T-cell (primary cell): ENCODE measurements at regions of chr7 and their contacts with region 1.

Region 1: DNA sequence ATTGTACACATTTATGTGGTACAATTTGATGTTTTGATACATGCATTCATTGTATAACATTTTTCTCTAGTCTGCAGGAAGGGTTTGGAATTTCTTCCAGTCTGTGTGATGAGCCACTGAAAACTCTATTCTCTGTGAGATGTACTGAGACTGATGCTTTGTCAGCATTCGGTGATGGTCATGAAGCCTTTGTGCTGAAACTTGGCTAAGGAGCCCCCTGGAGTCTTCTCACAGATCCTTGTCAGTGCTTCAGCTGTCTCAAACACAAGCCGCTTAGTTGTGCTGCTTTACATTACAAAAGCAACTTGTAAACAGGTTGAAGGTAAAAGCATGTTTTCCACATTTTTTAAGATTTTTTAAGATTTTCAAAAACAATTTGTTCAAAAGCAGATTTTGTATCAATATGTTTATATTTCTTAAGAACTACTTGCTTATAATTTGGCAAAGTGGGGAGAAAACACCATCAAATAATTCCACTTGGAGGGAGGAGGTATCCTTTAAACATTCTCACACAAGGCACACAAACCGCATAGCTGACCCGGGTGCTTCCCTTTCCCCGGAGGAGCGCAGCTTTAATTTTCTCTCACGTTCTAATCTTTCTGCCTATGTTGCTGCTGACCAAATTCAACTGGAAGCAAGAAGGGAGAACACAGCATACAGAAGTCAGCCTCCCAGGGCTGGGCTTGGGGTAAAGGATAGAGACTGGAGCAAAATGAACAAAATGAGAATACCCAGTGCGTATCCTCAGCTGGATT is 249.8 kb upstream of the VSTM2A start:
- DNase-seq: no peak
- ATAC-seq: no peak
- H3K4me3 ChIP-seq: no peak overlapping the region
- H3K4me3 Mint-ChIP-seq: no peak overlapping the region
- H3K27ac ChIP-seq: no peak overlapping the region
- H3K27ac Mint-ChIP-seq: no peak overlapping the region
- H3K4me1 ChIP-seq: no peaks in the 10 kb centered on the region
- H3K4me1 Mint-ChIP-seq: no peaks in the 10 kb centered on the region
- H3K27me3 ChIP-seq: no peaks in the 10 kb centered on the region
- H3K27me3 Mint-ChIP-seq: no peaks in the 10 kb centered on the region

Region 2: GRCh38 chr7:52656098-52656497 is 1636.2 kb before region 1 on chr7:
- CTCF ChIA-PET with region 1: no interaction called
- POLR2A ChIA-PET with region 1: interaction called in 1 of 2 experiments, 10 read pairs
- DNase-seq: no peak
- ATAC-seq: no peak
- H3K4me3 ChIP-seq: no peak overlapping the region
- H3K4me3 Mint-ChIP-seq: no peak overlapping the region
- H3K27ac ChIP-seq: no peak overlapping the region
- H3K27ac Mint-ChIP-seq: no peak overlapping the region
- H3K4me1 ChIP-seq: no peaks in the 10 kb centered on the region
- H3K4me1 Mint-ChIP-seq: no peaks in the 10 kb centered on the region
- H3K27me3 ChIP-seq: no peaks in the 10 kb centered on the region
- H3K27me3 Mint-ChIP-seq: no peaks in the 10 kb centered on the region

Region 3: GRCh38 chr7:54469740-54470139 is 177.4 kb after region 1 on chr7:
- CTCF ChIA-PET with region 1: no interaction called
- POLR2A ChIA-PET with region 1: no interaction called
- DNase-seq: no peak
- ATAC-seq: no peak
- H3K4me3 ChIP-seq: no peak overlapping the region
- H3K4me3 Mint-ChIP-seq: no peak overlapping the region
- H3K27ac ChIP-seq: no peak overlapping the region
- H3K27ac Mint-ChIP-seq: no peak overlapping the region
- H3K4me1 ChIP-seq: no peaks in the 10 kb centered on the region
- H3K4me1 Mint-ChIP-seq: no peaks in the 10 kb centered on the region
- H3K27me3 ChIP-seq: no peaks in the 10 kb centered on the region
- H3K27me3 Mint-ChIP-seq: no peaks in the 10 kb centered on the region

Region 4: GRCh38 chr7:54653905-54654304 is 361.6 kb after region 1 on chr7:
- CTCF ChIA-PET with region 1: no interaction called
- POLR2A ChIA-PET with region 1: no interaction called
- DNase-seq: no peak
- ATAC-seq: no peak
- H3K4me3 ChIP-seq: no peak overlapping the region
- H3K4me3 Mint-ChIP-seq: no peak overlapping the region
- H3K27ac ChIP-seq: no peak overlapping the region
- H3K27ac Mint-ChIP-seq: no peak overlapping the region
- H3K4me1 ChIP-seq: no peaks in the 10 kb centered on the region
- H3K4me1 Mint-ChIP-seq: no peaks in the 10 kb centered on the region
- H3K27me3 ChIP-seq: no peaks in the 10 kb centered on the region
- H3K27me3 Mint-ChIP-seq: no peaks in the 10 kb centered on the region